Spleen (tissue), 13 donors: ENCODE measurements at regions of chr1 and their contacts with region 1.

Region 1: DNA sequence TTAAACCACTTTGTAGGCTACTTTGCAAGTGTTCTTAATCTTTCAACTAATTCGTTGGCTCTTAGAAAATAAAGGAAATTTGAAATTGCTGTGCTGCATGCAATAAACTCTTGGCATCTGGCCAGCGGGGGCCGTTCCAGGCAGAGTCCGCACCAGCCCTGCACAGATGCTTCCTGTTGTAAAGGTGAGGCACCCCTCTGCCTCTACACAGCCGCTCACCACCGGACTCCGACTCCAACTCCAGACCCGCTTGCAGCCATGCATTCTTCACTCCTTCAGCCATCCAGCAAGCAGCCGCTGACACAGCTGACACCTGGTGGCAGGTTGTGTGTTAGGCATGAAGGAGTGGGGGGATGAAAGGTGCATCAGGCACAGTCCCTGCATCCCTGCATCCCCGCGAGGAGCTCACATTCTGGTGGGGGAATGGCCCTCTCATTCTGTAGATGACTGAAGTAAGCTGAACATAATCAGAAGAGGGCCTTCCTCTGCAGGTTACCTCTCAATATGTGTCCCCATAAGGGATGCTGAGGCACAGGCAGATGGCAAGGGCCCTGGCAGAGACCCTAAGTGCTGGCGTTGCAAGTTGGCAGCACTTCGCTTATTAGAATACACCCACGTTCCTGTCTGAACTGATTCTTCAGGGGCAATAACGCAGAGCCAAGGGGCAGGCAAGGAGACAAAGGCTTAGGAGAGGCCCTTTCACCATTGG is 56.8 kb downstream of the GLIS1 start:
- DNase-seq: no peak
- H3K4me3 ChIP-seq: no peak overlapping the region
- H3K27ac ChIP-seq: no peak overlapping the region
- H3K4me1 ChIP-seq: peaks cover 5 to 29% (median 17%) of the 10 kb centered on the region in 6 donors
- H3K27me3 ChIP-seq: peaks cover 0 to 53% (median 0%) of the 10 kb centered on the region in 7 donors
- CTCF ChIP-seq: peak in 8 of 11 experiments; percentile 11 to 43 (median 27)
- POLR2A ChIP-seq: no peak

Region 2: DNA sequence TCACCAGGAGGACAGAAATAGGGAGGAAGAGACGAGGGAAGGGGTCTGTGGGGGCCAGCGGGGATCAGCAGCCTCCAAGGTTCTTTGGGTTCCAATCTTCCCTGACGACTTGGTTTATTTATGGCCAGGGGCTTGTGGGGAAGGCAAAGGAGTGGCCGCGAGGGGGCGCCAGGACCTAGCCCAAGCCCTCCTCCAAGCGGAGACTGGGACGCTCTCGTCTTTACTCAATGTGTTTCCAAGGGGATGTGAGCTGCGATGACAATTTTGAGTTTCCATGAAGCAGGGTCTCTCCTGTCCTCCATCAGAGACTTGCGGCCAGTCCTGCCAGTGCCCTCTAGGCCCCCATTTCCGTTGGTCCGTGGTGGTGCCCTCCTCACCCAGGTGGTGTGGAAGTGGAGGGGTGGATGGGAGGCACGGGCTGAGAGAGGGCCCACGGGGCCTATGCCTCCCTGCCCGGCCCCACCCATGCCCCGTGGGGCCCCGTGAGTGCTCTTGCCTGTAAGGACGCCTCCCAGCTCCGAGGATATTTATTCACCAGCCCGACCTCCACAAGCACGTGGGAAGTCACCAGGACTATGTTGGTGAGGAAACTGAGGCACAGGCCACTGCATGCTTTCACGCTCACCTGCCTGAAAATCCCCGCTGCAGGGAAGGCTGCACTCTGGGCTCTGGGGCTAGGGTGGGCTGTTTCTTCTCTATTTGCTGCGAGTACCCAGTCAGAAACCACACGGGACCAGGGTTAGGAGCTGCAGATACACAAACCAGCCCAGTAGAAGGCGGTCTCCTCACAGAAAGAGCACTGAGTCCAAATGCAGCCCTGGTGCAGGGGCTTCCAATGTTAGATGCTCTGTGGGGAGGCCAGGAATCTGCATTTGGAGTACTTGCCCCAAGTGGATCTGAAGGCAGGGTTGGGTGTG is 196.4 kb before region 1 on chr1:
- intact Hi-C with region 1: loop called (anchors 5 kb)
- DNase-seq: peak; percentile 88
- H3K4me3 ChIP-seq: no peak overlapping the region
- H3K27ac ChIP-seq: no peak overlapping the region
- H3K4me1 ChIP-seq: peaks cover 0 to 7% (median 3%) of the 10 kb centered on the region in 6 donors
- H3K27me3 ChIP-seq: peaks cover 0 to 49% (median 17%) of the 10 kb centered on the region in 7 donors
- CTCF ChIP-seq: peak; percentile 41 to 88 (median 73)
- POLR2A ChIP-seq: no peak

Region 3: GRCh38 chr1:53625049-53625448 is 57.1 kb before region 1 on chr1:
- intact Hi-C with region 1: no loop called
- DNase-seq: no peak
- H3K4me3 ChIP-seq: no peak overlapping the region
- H3K27ac ChIP-seq: no peak overlapping the region
- H3K4me1 ChIP-seq: no peaks in the 10 kb centered on the region
- H3K27me3 ChIP-seq: no peaks in the 10 kb centered on the region
- CTCF ChIP-seq: no peak
- POLR2A ChIP-seq: no peak